Heart left ventricle (tissue), 16 donors: ENCODE measurements at regions of chr3 and their contacts with region 1.

Region 1: DNA sequence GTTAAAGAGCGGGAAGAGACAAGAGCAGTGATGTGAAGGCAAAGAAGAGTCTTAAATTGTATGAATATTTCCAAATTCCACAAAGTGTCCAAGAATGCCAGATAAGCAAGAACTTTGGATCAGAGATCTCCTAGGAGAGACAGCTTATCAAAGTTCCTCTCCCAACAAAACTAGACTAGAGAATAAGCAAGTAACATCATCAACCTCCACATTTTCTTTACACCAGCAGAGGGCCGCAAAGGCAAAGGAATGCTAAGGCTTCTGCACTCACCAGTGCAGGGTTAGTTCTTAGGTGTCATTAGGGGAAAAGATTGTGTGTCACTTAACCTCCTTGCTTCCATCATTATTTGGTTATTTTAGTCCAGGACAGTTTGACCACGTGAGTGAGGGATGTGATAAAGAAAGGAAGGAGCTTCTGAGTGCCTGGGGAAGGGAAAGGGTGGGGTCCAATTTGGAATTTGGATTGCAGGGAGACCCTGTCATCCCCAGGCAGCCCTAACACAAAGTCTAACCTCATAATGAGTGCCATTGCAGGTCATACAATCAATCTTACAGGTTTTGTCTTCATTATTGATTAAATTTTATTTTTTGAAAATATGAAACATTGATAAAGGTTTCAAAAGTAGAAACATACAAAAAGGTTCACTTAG is 7.5 kb upstream of the CMTM6 start:
- DNase-seq: peak in 4 of 5 donors; percentile 51 to 70 (median 60)
- ATAC-seq: peak; percentile 77 to 96 (median 94)
- H3K4me3 ChIP-seq: no peak overlapping the region
- H3K27ac ChIP-seq: no peak overlapping the region
- H3K4me1 ChIP-seq: no peaks in the 10 kb centered on the region
- H3K27me3 ChIP-seq: no peaks in the 10 kb centered on the region
- CTCF ChIP-seq: peak; percentile 44 to 88 (median 80)
- POLR2A ChIP-seq: no peak

Region 2: GRCh38 chr3:32570421-32571191 is 60.4 kb after region 1 on chr3 and contains the start of gene DYNC1LI1:
- intact Hi-C with region 1: loop called in 6 of 10 experiments (anchors 5 to 10 kb)
- DNase-seq: peak; percentile 96 to 98 (median 97)
- ATAC-seq: peak; percentile 96 to 98 (median 98)
- H3K4me3 ChIP-seq: peak within 1 kb of the TSS; percentile 65 to 99 (median 86)
- H3K27ac ChIP-seq: peak within 1 kb of the TSS; percentile 84 to 99 (median 98)
- H3K4me1 ChIP-seq: peaks cover 4 to 46% (median 32%) of the 10 kb centered on the region in 12 donors
- H3K27me3 ChIP-seq: no peaks in the 10 kb centered on the region
- CTCF ChIP-seq: no peak
- POLR2A ChIP-seq: peak; percentile 26 to 85
- total RNA-seq, gene DYNC1LI1: 40.8 to 65.0 (median 55.9) TPM

Region 3: GRCh38 chr3:32660634-32661033 is 150.4 kb after region 1 on chr3:
- intact Hi-C with region 1: loop called in 8 of 10 experiments (anchors 1 to 2 kb)
- DNase-seq: no peak
- ATAC-seq: no peak
- H3K4me3 ChIP-seq: no peak overlapping the region
- H3K27ac ChIP-seq: no peak overlapping the region
- H3K4me1 ChIP-seq: no peaks in the 10 kb centered on the region
- H3K27me3 ChIP-seq: no peaks in the 10 kb centered on the region
- CTCF ChIP-seq: no peak
- POLR2A ChIP-seq: no peak

Region 4: DNA sequence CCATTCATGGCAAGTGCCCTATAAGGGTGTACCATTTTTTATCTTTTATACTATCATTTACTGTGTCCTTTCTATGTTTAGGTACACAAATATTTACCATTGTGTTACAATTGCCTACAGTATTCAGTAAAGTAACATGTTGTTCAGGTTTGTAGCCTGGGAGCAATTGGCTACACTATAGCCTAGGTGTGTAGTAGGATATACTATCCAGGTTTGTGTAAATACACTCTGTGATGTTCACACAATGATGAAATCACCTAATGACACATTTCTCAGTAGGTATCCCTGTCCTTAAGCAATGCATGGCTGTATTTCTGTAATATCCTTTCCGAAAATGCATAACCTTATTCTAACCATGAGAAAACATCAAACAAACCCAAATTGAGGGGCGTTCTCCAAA is 156.9 kb after region 1 on chr3:
- intact Hi-C with region 1: loop called in 9 of 10 experiments (anchors 1 to 2 kb)
- DNase-seq: no peak
- ATAC-seq: no peak
- H3K4me3 ChIP-seq: no peak overlapping the region
- H3K27ac ChIP-seq: no peak overlapping the region
- H3K4me1 ChIP-seq: no peaks in the 10 kb centered on the region
- H3K27me3 ChIP-seq: no peaks in the 10 kb centered on the region
- CTCF ChIP-seq: no peak
- POLR2A ChIP-seq: no peak

Region 5: GRCh38 chr3:32781210-32781968 is 271.2 kb after region 1 on chr3:
- intact Hi-C with region 1: loop called in 1 of 10 experiments (anchors 5 kb)
- DNase-seq: peak; percentile 53 to 88 (median 75)
- ATAC-seq: peak; percentile 51 to 98 (median 92)
- H3K4me3 ChIP-seq: peak overlapping the region; percentile 31 to 70 (median 55)
- H3K27ac ChIP-seq: peak overlapping the region in 3 of 12 donors; percentile 0 to 31 (median 28)
- H3K4me1 ChIP-seq: peaks cover 0 to 15% (median 3%) of the 10 kb centered on the region in 12 donors
- H3K27me3 ChIP-seq: no peaks in the 10 kb centered on the region
- CTCF ChIP-seq: peak; percentile 70 to 92 (median 80)
- POLR2A ChIP-seq: no peak

Region 6: GRCh38 chr3:32842531-32842931 is 332.3 kb after region 1 on chr3:
- intact Hi-C with region 1: no loop called
- DNase-seq: no peak
- ATAC-seq: no peak
- H3K4me3 ChIP-seq: no peak overlapping the region
- H3K27ac ChIP-seq: no peak overlapping the region
- H3K4me1 ChIP-seq: peaks cover 0 to 1% (median 0%) of the 10 kb centered on the region in 12 donors
- H3K27me3 ChIP-seq: peaks cover 0 to 5% (median 0%) of the 10 kb centered on the region in 9 donors
- CTCF ChIP-seq: no peak
- POLR2A ChIP-seq: no peak

Region 7: DNA sequence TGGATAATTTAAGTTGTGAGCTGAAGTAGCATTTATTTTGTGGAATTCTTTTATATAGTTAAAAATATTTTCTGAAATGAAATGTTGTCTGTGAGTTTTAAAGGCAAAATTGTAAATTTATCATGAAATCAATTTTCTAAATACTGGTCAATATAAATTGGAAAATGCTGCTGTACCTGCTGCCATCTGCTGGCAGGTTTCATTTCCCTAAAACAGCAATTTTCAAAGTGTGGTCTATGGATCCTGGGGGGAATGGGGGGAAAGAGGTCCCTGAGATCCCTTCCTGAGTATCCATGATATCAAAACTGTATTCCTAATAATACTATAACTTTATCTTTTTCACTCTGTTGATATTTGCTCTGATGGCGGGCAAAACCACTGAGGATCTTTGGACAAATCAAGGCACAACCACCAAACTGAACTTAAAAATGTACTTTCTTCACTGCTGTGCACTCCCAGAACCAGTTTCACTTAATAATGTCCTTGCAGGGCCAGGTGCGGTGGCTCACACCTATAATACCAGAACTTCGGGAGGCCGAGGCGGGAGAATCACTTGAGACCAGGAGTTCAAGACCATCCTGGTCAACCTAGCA is 424.0 kb after region 1 on chr3:
- intact Hi-C with region 1: loop called in 4 of 10 experiments (anchors 5 to 10 kb)
- DNase-seq: no peak
- ATAC-seq: no peak
- H3K4me3 ChIP-seq: no peak overlapping the region
- H3K27ac ChIP-seq: no peak overlapping the region
- H3K4me1 ChIP-seq: no peaks in the 10 kb centered on the region
- H3K27me3 ChIP-seq: no peaks in the 10 kb centered on the region
- CTCF ChIP-seq: peak; percentile 32 to 69 (median 55)
- POLR2A ChIP-seq: no peak